ENCODE measurements at regions of chr3 and their contacts with region 1.

Region 1: DNA sequence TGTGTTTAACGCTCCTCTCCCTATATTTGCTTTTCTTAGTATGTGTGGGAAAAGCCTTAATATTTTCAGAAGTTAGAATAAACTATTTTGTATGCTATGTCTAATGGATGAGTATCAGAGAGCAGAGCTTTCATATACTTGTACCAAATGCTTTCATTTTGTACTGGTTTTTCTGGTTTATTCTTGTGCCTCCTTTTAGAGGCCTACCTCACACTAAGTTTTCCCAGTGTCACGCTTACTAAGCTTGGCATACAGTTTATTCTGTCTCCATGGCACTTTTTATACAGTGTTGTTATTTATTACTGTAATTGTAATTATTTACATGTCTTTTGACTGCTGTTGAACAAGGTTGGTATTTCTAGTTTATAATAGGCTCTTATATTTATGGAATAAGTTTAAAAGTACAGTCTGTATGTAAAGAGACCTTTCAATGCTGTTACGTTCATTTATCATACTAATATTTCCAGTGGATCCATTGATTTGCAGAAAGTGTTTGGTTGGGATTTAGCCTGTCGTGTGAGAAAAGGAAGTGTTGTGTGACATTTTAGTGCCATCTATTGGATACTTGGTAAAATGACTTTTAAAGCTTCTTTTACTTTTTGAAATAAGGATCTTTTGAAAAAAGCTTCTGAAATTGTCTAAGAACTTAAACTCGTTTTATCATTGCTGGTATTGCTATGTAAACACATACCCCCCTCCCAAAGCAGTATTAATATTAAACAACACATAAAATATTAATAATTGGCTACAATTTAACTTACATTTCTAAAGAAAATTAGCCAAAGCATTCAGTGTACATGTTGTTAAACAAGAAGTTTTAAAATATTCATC is 5.2 kb upstream of the EBLN2 start:
- DNase-seq: no peak
- H3K4me3 ChIP-seq: no peak overlapping the region
- H3K27ac ChIP-seq: no peak overlapping the region
- H3K4me1 ChIP-seq: peaks cover 4% of the 10 kb centered on the region
- H3K27me3 ChIP-seq: no peaks in the 10 kb centered on the region
- CTCF ChIP-seq: peak in 3 of 4 experiments; percentile 35 to 65 (median 65)
- POLR2A ChIP-seq: no peak

Region 2: DNA sequence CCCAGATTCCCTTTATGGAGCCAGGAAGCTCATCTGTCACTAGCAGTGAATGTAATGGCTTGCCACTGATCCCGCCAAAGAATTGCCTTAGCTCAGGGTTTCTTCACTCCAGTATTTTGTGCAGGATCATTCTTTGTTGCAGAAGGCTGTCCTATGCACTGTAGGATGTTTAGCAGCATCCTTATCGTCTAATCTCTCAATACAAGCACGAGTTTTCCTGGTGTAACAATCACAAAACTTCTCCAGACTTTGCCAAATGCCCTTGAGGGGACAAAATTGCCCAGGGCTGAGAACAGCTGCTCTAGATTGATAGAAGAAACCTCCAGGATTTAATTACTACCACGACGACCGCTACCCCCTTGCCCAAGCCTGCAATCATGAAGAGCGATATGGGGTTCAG is 201.2 kb before region 1 on chr3:
- intact Hi-C with region 1: loop called (anchors 10 kb)
- DNase-seq: no peak
- H3K4me3 ChIP-seq: no peak overlapping the region
- H3K27ac ChIP-seq: no peak overlapping the region
- H3K4me1 ChIP-seq: no peaks in the 10 kb centered on the region
- H3K27me3 ChIP-seq: no peaks in the 10 kb centered on the region
- CTCF ChIP-seq: no peak
- POLR2A ChIP-seq: no peak

Region 3: DNA sequence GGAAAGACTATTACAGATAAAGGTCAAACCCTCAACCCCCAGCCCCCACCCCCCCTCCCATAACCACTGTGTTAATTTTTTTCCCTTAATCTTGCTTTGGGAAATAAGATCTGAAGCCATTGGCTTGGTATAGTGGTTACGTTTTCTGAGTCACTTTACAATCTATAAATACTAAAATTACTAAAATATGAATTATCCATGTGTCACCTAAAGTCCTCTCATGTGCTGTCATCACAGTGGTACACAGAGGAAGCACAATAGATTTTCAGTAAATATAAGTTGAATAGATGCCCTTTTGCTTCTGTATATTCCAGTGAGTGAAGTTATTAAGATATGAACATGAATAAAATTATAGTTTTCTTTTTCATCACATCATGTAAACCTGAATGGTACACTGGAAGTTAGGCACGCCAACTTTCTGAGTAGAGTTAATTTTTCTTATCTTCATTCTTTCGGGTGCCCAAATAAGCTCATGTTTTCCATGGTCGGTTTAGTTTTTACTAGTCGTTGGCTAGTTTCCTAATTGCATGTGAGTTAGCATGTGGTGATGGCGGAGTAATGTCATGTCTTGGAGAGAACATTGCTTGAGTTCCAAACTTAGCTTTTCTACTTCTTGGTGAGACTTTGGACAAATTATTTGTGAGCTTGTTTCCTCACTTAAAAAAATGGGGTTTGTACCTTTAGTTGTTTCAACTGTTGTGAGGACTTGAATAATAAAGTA is 48.1 kb before region 1 on chr3:
- intact Hi-C with region 1: no loop called
- DNase-seq: no peak
- H3K4me3 ChIP-seq: no peak overlapping the region
- H3K27ac ChIP-seq: no peak overlapping the region
- H3K4me1 ChIP-seq: no peaks in the 10 kb centered on the region
- H3K27me3 ChIP-seq: no peaks in the 10 kb centered on the region
- CTCF ChIP-seq: no peak
- POLR2A ChIP-seq: no peak